Esophagus squamous epithelium (tissue), 5 donors: ENCODE measurements at regions of chr3 and their contacts with region 1.

Region 1: DNA sequence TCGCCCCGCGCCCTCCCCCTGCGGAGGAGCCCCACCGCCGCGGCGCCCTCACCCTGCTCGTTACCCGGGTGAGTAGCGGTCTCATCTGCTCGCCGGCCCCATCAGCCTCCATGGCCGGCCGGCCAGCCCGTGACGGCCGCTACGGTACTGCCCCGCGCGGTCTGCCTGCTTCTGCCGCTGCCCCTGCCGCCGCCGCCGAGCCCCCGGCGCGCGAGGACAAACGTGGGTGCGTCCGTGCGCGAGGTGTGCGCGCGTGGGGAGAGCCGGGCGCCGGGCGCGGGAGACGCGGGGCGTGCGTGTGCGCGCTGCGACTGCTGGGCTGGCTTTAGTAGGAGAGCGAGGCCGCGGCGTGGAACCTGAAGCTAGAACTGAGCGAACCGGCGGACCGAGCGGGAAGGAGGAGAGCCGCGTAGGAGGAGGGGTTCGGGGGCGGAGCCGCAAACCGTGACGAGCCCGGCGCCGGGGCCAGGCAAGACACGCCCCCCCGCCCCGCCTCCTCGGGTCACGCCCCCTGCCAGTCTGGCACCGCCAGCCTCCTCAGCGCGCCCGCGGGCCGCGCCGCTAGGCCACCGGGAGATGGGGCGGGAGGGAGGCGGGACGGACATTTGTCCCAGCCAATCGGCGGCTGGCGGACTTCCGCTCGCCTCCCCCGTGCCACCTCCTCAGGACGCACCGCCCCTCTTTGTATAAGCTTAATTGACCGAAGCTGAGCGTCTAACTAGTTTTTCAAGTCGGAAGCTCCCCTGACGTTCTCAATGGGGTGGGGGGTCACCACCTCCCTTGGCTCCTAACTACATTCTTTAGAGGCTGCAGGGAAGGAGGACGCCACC is at the start of gene SLC4A7:
- DNase-seq: peak; percentile 91
- H3K4me3 ChIP-seq: peak within 1 kb of the TSS; percentile 77 to 99 (median 82)
- H3K27ac ChIP-seq: peak within 1 kb of the TSS; percentile 91 to 99 (median 95)
- H3K4me1 ChIP-seq: peaks cover 0 to 61% (median 13%) of the 10 kb centered on the region in 3 donors
- H3K27me3 ChIP-seq: no peaks in the 10 kb centered on the region
- CTCF ChIP-seq: peak in 1 of 6 experiments; percentile 5
- POLR2A ChIP-seq: peak in 3 of 4 donors; percentile 59 to 99 (median 98)
- total RNA-seq, gene SLC4A7: 17.2 to 50.4 (median 30.5) TPM

Region 2: DNA sequence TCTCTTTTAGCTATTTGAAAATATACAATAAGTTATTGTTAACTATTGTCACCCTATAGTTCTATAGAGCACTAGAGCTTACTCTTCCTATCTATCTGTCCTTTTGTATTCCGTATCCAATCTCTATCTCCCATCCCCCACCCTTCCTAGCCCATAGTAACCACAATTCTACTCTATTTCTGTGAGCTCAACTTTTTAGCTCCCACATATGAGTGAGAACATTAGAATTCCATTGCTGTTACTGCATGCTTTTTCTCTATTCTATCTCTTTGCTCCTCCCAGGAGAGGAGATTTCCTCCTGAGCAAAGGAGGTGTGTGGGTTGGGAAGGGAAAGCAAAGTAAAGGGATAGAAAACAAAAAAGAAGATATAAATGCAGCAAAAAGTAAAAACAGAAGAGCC is 105.6 kb after region 1 on chr3:
- intact Hi-C with region 1: loop called (anchors 10 kb)
- DNase-seq: no peak
- H3K4me3 ChIP-seq: no peak overlapping the region
- H3K27ac ChIP-seq: peak overlapping the region in 3 of 4 donors; percentile 15 to 80 (median 75)
- H3K4me1 ChIP-seq: peaks cover 16 to 79% (median 32%) of the 10 kb centered on the region in 3 donors
- H3K27me3 ChIP-seq: no peaks in the 10 kb centered on the region
- CTCF ChIP-seq: no peak
- POLR2A ChIP-seq: no peak

Region 3: DNA sequence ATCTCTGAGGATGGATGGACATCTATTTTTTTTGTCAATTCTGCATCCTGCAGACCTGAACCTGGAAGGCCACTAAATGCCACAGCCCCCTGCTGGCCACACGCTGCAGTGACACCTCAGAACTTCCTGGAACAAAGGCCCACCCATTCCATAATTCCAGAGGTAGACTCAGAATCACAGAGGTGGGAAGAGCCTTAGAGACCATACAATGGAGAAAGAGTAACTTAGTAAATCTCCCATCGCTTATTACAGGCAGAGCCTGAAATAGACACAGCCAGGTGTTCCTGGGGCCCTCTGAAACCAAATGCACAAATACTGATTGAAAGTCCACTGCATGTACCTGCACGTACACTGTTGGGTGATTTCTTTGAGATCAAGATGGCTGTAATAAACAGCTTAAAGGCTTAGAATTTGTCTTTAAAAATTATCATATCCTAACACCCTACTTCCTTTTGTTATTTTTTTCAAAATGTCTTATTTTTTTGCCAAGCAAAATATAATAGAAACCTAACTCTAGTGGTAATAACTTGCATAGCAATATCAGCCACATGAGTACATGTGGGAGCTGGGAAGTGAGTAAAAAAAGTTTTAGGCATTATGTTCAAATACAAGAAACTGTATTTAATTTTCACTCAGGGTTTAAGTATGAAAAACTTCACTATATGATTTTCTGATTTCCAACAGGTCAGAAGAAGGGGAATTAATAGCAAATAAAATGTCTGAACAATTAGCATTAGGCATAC is 175.2 kb after region 1 on chr3:
- intact Hi-C with region 1: loop called (anchors 10 kb)
- DNase-seq: no peak
- H3K4me3 ChIP-seq: no peak overlapping the region
- H3K27ac ChIP-seq: peak overlapping the region in 1 of 4 donors; percentile 17
- H3K4me1 ChIP-seq: peaks cover 0 to 6% (median 0%) of the 10 kb centered on the region in 3 donors
- H3K27me3 ChIP-seq: no peaks in the 10 kb centered on the region
- CTCF ChIP-seq: peak; percentile 71 to 85 (median 80)
- POLR2A ChIP-seq: no peak

Region 4: DNA sequence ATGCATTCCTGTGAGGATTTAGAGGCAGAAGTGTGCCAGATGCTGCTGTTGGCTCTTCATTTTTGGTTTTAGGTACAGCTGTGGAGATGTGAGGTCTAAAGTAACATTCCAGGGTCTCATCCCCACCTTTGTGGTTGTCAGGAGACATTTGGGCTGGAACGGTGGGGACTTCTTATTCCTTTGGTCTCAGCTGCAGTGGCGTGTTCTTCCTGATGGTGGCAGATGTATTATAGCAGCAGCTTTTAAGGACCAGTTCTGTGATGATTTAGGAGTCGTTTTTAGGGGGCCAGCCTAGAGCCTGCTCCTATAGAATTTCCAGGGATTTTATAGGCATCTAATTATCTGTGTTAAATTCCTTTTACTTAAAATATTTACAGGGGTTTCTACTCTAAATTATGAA is 458.9 kb after region 1 on chr3:
- intact Hi-C with region 1: no loop called
- DNase-seq: no peak
- H3K4me3 ChIP-seq: no peak overlapping the region
- H3K27ac ChIP-seq: no peak overlapping the region
- H3K4me1 ChIP-seq: no peaks in the 10 kb centered on the region
- H3K27me3 ChIP-seq: no peaks in the 10 kb centered on the region
- CTCF ChIP-seq: peak in 1 of 6 experiments; percentile 21
- POLR2A ChIP-seq: no peak